Left colon (tissue), 2 donors: ENCODE measurements at regions of chr11 and their contacts with region 1.

Region 1: DNA sequence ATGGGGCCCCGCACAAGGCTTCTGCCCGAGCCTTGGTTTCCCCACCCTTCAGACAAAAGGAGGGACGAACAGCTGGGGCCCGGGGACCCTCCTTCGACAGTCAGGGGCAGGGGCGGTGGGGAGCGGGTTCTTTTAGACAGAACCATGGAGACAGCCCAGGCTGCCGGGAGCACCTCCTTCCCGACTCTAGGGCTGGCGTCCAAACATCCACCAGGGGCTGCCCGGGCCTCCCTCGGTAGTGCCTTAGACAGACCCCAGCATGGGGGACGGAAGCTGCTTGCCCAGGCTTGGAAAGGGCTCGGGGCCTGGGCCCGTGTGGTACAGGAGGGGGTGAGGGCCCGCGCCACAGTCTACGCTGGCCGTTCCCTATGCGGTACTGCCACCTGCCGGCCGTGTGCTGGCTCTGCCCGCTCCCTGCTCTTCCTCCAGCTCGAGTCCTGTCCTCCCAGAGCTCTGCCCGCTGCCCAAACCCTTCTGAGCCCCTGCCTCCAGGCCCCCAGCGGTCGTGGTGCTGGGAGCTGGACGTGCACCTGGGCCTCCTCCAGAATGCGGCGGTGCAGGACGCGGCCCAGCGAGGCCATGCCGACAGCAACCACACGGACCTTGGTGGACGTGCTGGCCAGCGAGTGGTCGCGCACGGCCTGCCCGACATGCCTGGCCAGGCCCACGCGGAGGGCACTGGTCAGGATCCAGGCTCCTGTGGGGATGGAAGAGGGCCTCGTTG is 20.1 kb downstream of the TSSC4 start:
- DNase-seq: peak in 1 of 2 donors; percentile 82
- ATAC-seq: peak; percentile 87

Region 2: GRCh38 chr11:2202055-2202899 is 218.4 kb before region 1 on chr11:
- intact Hi-C with region 1: loop called in 1 of 2 experiments (anchors 5 kb)
- DNase-seq: peak; percentile 81 to 86
- ATAC-seq: peak; percentile 81

Region 3: DNA sequence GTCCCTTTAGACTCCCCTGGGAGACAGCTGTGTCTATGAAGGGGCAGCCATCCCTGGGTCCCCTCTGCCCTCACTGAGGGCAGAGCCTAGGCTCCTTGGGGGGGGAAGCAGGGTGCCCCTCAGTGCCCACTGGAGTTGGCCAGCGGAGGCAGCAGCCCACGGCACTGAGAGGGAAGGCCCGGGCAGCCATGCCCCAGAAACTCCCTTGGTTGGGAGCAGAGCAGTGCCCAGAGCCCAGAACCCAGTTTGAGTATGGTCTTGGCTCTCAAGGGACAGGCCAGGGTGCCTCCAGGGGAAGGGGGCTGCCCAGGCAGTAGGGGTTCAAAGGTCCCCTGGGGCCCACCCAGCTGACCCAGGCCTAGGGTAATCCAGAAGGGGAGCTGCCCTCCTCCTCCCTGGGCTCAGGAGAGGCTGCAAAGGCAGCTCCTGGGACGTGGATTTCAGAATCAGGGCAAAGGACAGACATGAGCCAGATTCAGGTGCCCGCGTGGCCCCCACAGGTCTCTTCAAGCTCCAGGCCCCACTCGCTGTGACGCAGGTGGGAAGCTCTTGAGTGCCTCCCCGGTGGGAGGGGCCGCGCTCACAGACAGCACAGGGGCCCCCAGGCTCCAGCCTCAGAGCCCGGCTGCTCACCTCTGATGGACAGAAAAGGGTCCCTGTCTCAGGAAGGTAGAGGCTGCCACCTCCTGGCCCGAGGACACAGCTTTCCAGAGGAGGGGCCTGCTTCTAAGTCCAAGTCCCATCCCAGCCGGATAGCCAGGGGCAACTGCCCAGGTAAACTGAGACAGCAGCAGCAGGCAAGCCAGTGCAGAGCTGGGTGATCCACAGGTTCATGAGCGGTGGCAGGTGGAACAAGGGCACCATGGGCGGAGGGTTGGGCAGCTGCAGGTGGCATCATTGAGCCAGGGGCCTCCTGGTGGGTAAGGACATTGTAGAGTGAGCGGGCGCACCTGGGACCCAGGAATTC is 121.6 kb before region 1 on chr11:
- intact Hi-C with region 1: loop called in 1 of 2 experiments (anchors 5 kb)
- DNase-seq: peak; percentile 23 to 50
- ATAC-seq: peak; percentile 68

Region 4: GRCh38 chr11:2305140-2305840 is 115.4 kb before region 1 on chr11:
- intact Hi-C with region 1: loop called (anchors 5 kb)
- DNase-seq: peak; percentile 74 to 94
- ATAC-seq: peak; percentile 83

Region 5: GRCh38 chr11:2315395-2316168 is 105.1 kb before region 1 on chr11:
- intact Hi-C with region 1: no loop called
- DNase-seq: no peak
- ATAC-seq: peak; percentile 6

Region 6: GRCh38 chr11:2892215-2893020 is 471.8 kb after region 1 on chr11:
- intact Hi-C with region 1: loop called in 1 of 2 experiments (anchors 10 kb)
- DNase-seq: peak; percentile 55 to 68
- ATAC-seq: peak; percentile 41